Activated B cell treated with CpG ODN at 0.5 μM for 24 hours (primary cell): ENCODE measurements at regions of chr14 and their contacts with region 1.

Region 1: GRCh38 chr14:51094901-51095853 is at the start of gene TRIM9:
- DNase-seq: peak; percentile 88
- ATAC-seq: peak; percentile 98
- H3K4me3 Mint-ChIP-seq: peak within 1 kb of the TSS; percentile 91
- H3K27ac Mint-ChIP-seq: peak within 1 kb of the TSS; percentile 18
- H3K4me1 Mint-ChIP-seq: peaks cover 27% of the 10 kb centered on the region
- H3K27me3 Mint-ChIP-seq: peaks cover 26% of the 10 kb centered on the region
- CTCF ChIP-seq: no peak
- total RNA-seq, gene TRIM9: 0.24 and 0.67 TPM in 2 replicates

Region 2: GRCh38 chr14:50943943-50944646 is 151.1 kb before region 1 on chr14 and contains the start of gene PYGL:
- CTCF ChIA-PET with region 1: no interaction called
- POLR2A ChIA-PET with region 1: no interaction called
- intact Hi-C with region 1: loop called (anchors 5 kb)
- DNase-seq: peak; percentile 39
- ATAC-seq: peak; percentile 87
- H3K4me3 Mint-ChIP-seq: peak within 1 kb of the TSS; percentile 86
- H3K27ac Mint-ChIP-seq: no peak within 1 kb of the TSS
- H3K4me1 Mint-ChIP-seq: peaks cover 15% of the 10 kb centered on the region
- H3K27me3 Mint-ChIP-seq: peaks cover 37% of the 10 kb centered on the region
- CTCF ChIP-seq: no peak
- total RNA-seq, gene PYGL: 0.32 TPM in 1 of 2 replicates, not detected in the other

Region 3: GRCh38 chr14:51651388-51652167 is 556.4 kb after region 1 on chr14 and contains the start of gene FRMD6:
- CTCF ChIA-PET with region 1: no interaction called
- POLR2A ChIA-PET with region 1: no interaction called
- intact Hi-C with region 1: loop called (anchors 10 kb)
- DNase-seq: peak; percentile 71
- ATAC-seq: peak; percentile 80
- H3K4me3 Mint-ChIP-seq: peak within 1 kb of the TSS; percentile 82
- H3K27ac Mint-ChIP-seq: peak within 1 kb of the TSS; percentile 35
- H3K4me1 Mint-ChIP-seq: peaks cover 8% of the 10 kb centered on the region
- H3K27me3 Mint-ChIP-seq: peaks cover 30% of the 10 kb centered on the region
- CTCF ChIP-seq: no peak
- total RNA-seq, gene FRMD6: 0.32 and 0.33 TPM in 2 replicates